ENCODE measurements at regions of chrX and their contacts with region 1.

Region 1: DNA sequence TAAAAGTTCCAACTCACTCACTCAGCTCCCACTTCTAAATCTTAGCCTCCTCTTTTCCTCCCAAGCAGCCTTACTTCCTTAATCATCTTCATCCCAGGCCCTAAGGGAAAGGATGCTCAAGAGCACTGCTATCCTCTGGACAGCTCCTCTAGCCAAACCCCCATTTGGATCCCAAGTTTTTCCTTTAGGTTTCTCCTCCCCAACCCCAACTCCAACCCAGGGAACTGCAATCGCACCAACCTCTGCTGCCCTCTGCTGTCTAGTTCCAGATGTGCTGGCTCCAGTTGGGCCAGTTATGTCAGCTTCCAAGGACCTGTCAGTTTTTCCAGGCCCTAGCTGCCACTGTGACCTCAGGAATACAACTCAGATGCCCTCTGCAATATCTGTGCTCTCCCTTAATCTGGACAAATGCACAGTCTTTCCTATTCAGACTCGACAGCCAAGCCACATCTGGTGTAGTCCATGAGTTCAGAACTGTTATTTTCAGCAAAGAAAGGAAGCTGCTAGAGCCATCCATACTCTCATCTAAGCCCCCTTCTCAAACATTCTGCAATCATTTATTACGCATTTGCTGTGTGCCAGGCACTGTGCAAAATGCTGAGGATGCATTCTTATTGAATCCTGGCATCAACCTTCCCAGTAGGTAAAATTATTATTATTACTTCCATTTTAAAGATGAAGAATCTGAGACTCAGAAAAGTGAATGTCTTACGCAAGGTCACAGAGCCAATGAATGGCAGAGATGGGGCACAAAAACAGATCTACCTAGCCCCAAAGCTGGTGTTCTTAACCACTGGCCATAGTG is 12.3 kb upstream of the XPNPEP2 start:
- DNase-seq: peak; percentile 21
- ATAC-seq: peak; percentile 83
- H3K4me3 ChIP-seq: no peak overlapping the region
- H3K27ac ChIP-seq: no peak overlapping the region
- H3K4me1 ChIP-seq: no peaks in the 10 kb centered on the region
- H3K27me3 ChIP-seq: no peaks in the 10 kb centered on the region
- CTCF ChIP-seq: peak; percentile 82
- EP300 ChIP-seq: no peak
- POLR2A ChIP-seq: no peak
- RAD21 ChIP-seq: peak; percentile 76

Region 2: DNA sequence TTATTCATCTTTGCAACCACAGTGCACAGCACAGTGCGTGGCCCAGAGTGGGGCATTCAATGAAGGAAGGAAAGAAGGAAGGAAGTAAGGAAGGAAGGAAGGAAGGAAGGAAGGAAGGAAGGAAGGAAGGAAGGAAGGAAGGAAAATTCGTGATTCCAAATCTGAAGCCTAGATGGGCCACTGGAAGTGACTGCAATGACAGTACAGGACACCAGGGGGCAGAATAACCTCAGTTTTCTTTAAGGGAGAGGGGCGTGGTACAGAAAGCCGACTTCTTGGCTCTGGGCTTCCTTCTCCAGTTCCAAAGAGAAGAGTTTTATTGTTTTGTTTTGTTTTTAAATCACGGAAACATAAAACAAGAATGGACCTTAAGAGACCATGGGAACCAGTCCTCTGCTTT is 119.6 kb before region 1 on chrX:
- CTCF ChIA-PET with region 1: interaction called, 23 read pairs
- POLR2A ChIA-PET with region 1: no interaction called
- in situ Hi-C with region 1: loop called (anchors 5 kb)
- intact Hi-C with region 1: loop called (anchors 1 kb)
- DNase-seq: peak; percentile 30
- ATAC-seq: peak; percentile 44; the same call in 2 of the 3 replicates
- H3K4me3 ChIP-seq: no peak overlapping the region
- H3K27ac ChIP-seq: no peak overlapping the region
- H3K4me1 ChIP-seq: 0 out of 2 replicates have a peak, but pooled peaks cover 8% of the 10 kb centered on the region
- H3K27me3 ChIP-seq: no peaks in the 10 kb centered on the region
- CTCF ChIP-seq: peak; percentile 78
- EP300 ChIP-seq: no peak
- POLR2A ChIP-seq: no peak
- RAD21 ChIP-seq: 0 out of 2 replicates have a peak, but pooled peaks have one; percentile 45

Region 3: GRCh38 chrX:129629837-129630236 is 96.7 kb before region 1 on chrX:
- CTCF ChIA-PET with region 1: no interaction called
- POLR2A ChIA-PET with region 1: no interaction called
- in situ Hi-C with region 1: loop called (anchors 10 kb)
- intact Hi-C with region 1: loop called (anchors 2 kb)
- DNase-seq: no peak
- ATAC-seq: no peak
- H3K4me3 ChIP-seq: no peak overlapping the region
- H3K27ac ChIP-seq: no peak overlapping the region
- H3K4me1 ChIP-seq: no peaks in the 10 kb centered on the region
- H3K27me3 ChIP-seq: no peaks in the 10 kb centered on the region
- CTCF ChIP-seq: no peak
- EP300 ChIP-seq: no peak
- POLR2A ChIP-seq: no peak
- RAD21 ChIP-seq: no peak

Region 4: GRCh38 chrX:129637217-129638109 is 89.0 kb before region 1 on chrX:
- CTCF ChIA-PET with region 1: interaction called, 27 read pairs
- POLR2A ChIA-PET with region 1: no interaction called
- in situ Hi-C with region 1: loop called (anchors 10 kb)
- intact Hi-C with region 1: loop called (anchors 1 kb)
- DNase-seq: peak; percentile 24
- ATAC-seq: peak; percentile 69
- H3K4me3 ChIP-seq: no peak overlapping the region
- H3K27ac ChIP-seq: no peak overlapping the region
- H3K4me1 ChIP-seq: peaks cover 17% of the 10 kb centered on the region
- H3K27me3 ChIP-seq: no peaks in the 10 kb centered on the region; a peak in 1 of 5 replicates
- CTCF ChIP-seq: peak; percentile 79
- EP300 ChIP-seq: no peak
- POLR2A ChIP-seq: no peak
- RAD21 ChIP-seq: 0 out of 2 replicates have a peak, but pooled peaks have one; percentile 16

Region 5: GRCh38 chrX:129663171-129663570 is 63.3 kb before region 1 on chrX:
- CTCF ChIA-PET with region 1: no interaction called
- POLR2A ChIA-PET with region 1: no interaction called
- in situ Hi-C with region 1: no loop called
- intact Hi-C with region 1: no loop called
- DNase-seq: no peak
- ATAC-seq: no peak
- H3K4me3 ChIP-seq: no peak overlapping the region
- H3K27ac ChIP-seq: no peak overlapping the region
- H3K4me1 ChIP-seq: no peaks in the 10 kb centered on the region
- H3K27me3 ChIP-seq: no peaks in the 10 kb centered on the region; a peak in 1 of 5 replicates
- CTCF ChIP-seq: no peak
- EP300 ChIP-seq: no peak
- POLR2A ChIP-seq: no peak
- RAD21 ChIP-seq: no peak